ENCODE measurements at regions of chr1 and their contacts with region 1.

Region 1: GRCh38 chr1:198465201-198466144 is 75.0 kb downstream of the ATP6V1G3 start:
- DNase-seq: peak in 1 of 2 donors; percentile 67
- ATAC-seq: peak; percentile 36 to 70 (median 58)
- H3K4me3 ChIP-seq: no peak overlapping the region
- H3K4me3 Mint-ChIP-seq: no peak overlapping the region
- H3K27ac ChIP-seq: no peak overlapping the region
- H3K27ac Mint-ChIP-seq: no peak overlapping the region
- H3K4me1 ChIP-seq: no peaks in the 10 kb centered on the region
- H3K4me1 Mint-ChIP-seq: peaks cover 0 to 17% of the 10 kb centered on the region in 2 donors
- H3K27me3 ChIP-seq: no peaks in the 10 kb centered on the region
- H3K27me3 Mint-ChIP-seq: no peaks in the 10 kb centered on the region
- CTCF ChIP-seq: peak; percentile 67

Region 2: DNA sequence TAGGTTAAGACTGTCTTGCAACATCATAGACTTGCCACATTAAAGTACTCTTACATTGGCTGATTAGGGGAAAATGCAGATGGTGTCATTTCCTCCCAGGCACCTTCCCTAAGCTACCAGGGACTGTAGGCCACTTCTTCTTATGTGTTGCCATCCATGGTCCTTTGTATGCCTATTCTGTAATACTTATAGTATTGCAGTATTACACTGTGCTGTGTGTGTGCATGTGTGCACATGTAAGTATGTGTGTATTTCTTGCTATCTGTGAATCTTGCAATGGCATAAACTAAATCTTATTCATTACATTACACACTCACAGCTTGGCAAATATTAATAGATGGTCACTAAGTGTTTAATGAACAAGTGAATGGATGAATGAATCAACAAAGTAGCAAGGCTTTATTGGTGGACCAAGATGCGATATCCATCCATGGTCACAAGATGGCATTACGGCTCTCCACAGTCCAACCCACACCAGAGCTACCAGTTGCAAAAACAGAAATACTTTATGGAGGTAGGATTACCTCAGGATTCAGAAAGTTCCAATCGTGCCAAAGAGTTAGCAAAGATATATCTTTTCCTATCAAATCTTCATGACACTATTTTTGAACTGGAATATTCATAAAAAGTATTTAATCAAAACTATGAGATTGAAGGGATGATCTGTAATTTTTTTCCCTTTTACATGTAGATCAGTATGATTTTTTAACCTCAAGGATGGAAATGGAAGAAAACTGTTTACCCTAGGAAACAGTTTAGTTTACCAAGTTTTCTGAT is 850.4 kb before region 1 on chr1:
- intact Hi-C with region 1: loop called (anchors 10 kb)
- DNase-seq: peak in 1 of 2 donors; percentile 59
- ATAC-seq: peak; percentile 57 to 77 (median 61)
- H3K4me3 ChIP-seq: no peak overlapping the region
- H3K4me3 Mint-ChIP-seq: no peak overlapping the region
- H3K27ac ChIP-seq: no peak overlapping the region
- H3K27ac Mint-ChIP-seq: no peak overlapping the region
- H3K4me1 ChIP-seq: no peaks in the 10 kb centered on the region
- H3K4me1 Mint-ChIP-seq: no peaks in the 10 kb centered on the region
- H3K27me3 ChIP-seq: no peaks in the 10 kb centered on the region
- H3K27me3 Mint-ChIP-seq: no peaks in the 10 kb centered on the region
- CTCF ChIP-seq: peak; percentile 60

Region 3: GRCh38 chr1:198399452-198399851 is 66.0 kb before region 1 on chr1:
- intact Hi-C with region 1: no loop called
- DNase-seq: no peak
- ATAC-seq: no peak
- H3K4me3 ChIP-seq: no peak overlapping the region
- H3K4me3 Mint-ChIP-seq: no peak overlapping the region
- H3K27ac ChIP-seq: no peak overlapping the region
- H3K27ac Mint-ChIP-seq: no peak overlapping the region
- H3K4me1 ChIP-seq: no peaks in the 10 kb centered on the region
- H3K4me1 Mint-ChIP-seq: no peaks in the 10 kb centered on the region
- H3K27me3 ChIP-seq: peaks cover 4% of the 10 kb centered on the region
- H3K27me3 Mint-ChIP-seq: peaks cover 5 to 42% of the 10 kb centered on the region in 2 donors
- CTCF ChIP-seq: no peak

Region 4: DNA sequence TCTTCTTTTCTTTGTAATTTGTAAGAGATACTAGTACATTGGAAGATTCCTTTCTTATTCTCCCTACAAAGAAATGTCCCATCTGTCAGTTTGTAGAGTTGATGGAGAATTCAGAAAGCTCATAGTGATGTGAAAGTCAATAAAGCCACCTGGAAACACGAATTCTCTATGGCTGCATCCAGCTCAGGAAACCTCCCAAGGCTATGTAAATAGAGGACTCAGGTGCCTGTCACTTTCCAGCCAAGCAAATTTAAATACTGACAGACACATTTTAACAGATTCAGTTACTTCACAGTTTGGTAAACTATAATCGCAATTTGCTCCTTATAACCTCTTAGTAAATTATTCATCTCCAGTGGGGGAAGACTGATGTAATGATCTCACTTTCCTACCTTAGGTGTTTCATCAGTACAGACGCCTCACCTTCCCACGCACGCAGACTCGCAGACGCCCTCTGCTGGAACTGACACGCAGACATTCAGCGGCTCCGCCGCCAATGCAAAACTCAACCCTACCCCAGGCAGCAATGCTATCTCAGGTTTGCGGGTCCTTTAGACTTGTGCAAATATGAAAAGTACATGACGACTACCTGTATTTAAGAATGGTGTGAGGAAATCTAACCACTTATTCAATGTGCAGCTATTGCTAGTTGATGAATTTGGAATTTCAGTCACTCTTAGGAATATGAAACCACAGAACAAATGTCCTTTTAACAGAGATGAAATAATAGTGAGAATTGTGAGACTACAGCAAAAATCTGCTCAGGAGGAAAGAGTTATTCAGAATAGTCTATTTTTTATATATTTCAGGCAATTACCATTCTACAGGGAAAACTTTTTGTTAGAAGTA is 233.9 kb after region 1 on chr1:
- intact Hi-C with region 1: no loop called
- DNase-seq: peak; percentile 35 to 84
- ATAC-seq: peak; percentile 42 to 81 (median 66)
- H3K4me3 ChIP-seq: no peak overlapping the region
- H3K4me3 Mint-ChIP-seq: peak overlapping the region; percentile 65
- H3K27ac ChIP-seq: no peak overlapping the region
- H3K27ac Mint-ChIP-seq: peak overlapping the region; percentile 83 to 88
- H3K4me1 ChIP-seq: peaks cover 25% of the 10 kb centered on the region
- H3K4me1 Mint-ChIP-seq: peaks cover 65 to 77% of the 10 kb centered on the region in 2 donors
- H3K27me3 ChIP-seq: no peaks in the 10 kb centered on the region
- H3K27me3 Mint-ChIP-seq: no peaks in the 10 kb centered on the region
- CTCF ChIP-seq: peak; percentile 1